Psoas muscle (tissue), 8 donors: ENCODE measurements at regions of chr22 and their contacts with region 1.

Region 1: DNA sequence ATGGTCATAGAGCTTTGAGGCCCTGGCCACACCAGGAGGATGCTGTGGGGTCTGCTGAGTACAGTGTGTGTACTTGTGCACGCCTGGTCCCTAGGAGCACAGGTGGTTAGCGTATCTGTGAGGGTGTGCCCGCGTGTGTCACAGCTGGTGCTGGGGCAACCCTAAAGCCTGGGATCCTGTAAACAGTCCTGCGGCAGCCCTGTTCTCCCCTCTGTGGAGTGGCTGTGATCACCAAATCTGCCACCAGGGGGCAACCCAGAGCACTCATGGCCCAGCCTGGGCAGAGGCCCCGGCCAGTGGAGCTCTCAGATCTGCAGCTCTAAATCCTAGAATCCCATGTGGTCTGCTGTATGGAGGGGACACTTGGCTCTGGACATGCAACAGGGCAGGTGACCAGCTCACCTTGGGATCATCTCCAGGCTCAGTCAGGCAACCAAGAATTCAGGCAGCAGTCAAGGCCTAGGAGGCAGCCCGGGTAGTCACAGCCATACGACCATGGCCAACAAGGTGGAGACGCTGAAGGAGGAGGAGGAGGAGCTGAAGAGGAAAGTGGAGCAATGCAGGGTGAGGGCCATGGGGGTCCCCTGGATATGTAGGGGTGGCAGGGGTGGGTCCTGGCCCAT is 3.9 kb downstream of the SH3BP1 start:
- DNase-seq: peak; percentile 87 to 93
- ATAC-seq: peak; percentile 86 to 91 (median 90)
- H3K4me3 ChIP-seq: no peak overlapping the region
- H3K27ac ChIP-seq: no peak overlapping the region
- H3K4me1 ChIP-seq: no peaks in the 10 kb centered on the region
- H3K27me3 ChIP-seq: peaks cover 0 to 10% (median 0%) of the 10 kb centered on the region in 3 donors
- CTCF ChIP-seq: peak; percentile 95

Region 2: DNA sequence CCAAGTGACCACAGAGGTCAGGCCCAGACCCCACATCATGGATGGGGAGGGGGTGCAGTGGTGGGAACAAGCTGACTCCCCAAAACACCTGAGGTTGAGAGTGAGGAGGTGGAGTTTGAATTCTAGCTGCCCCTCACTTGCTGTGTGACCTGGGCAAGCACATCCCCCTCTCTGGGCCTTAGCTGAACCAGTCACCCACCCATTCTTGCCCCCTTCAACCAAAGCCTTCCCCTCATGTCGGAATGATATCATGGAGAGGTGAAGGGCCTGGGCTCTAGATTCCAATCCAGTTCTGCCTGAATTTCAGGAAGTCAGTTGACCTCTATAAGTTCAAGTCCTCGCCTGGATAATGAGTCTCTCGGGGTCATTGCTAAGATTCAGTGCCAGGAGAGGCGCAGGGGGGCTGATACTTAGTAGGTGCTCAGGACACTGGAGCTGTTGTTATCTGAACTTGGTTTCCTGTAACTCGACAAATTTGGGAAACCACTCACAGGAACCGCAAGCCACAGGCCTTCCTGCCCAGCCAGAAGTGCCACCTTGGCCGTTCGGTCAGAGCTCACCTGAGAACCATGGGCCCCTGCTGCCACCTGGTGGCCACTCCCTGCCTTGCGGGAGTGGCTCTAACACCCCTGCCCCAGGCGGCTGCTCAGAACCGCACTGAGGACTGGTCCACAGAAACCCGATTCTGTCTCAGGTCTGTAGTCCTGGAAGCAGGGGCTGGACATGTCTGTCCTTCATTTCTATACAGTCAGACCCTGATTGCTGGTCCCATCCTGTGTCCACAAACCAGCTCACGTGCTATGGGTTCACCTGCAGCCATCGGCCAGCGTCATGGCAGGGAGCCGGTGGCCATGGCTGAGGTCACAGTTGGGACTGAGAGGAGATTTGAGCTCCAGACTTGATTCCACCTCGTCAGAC is 76.2 kb before region 1 on chr22:
- intact Hi-C with region 1: no loop called
- DNase-seq: peak; percentile 80 to 89
- ATAC-seq: peak; percentile 74 to 88 (median 87)
- H3K4me3 ChIP-seq: no peak overlapping the region
- H3K27ac ChIP-seq: no peak overlapping the region
- H3K4me1 ChIP-seq: peaks cover 28% of the 10 kb centered on the region
- H3K27me3 ChIP-seq: peaks cover 0 to 20% (median 2%) of the 10 kb centered on the region in 3 donors
- CTCF ChIP-seq: peak; percentile 91

Region 3: GRCh38 chr22:37686002-37686982 is 43.0 kb after region 1 on chr22 and contains the start of gene NOL12:
- intact Hi-C with region 1: loop called (anchors 1 to 2 kb)
- DNase-seq: peak; percentile 79 to 89
- ATAC-seq: peak; percentile 86 to 94 (median 90)
- H3K4me3 ChIP-seq: peak within 1 kb of the TSS; percentile 78
- H3K27ac ChIP-seq: peak within 1 kb of the TSS; percentile 99
- H3K4me1 ChIP-seq: peaks cover 18% of the 10 kb centered on the region
- H3K27me3 ChIP-seq: no peaks in the 10 kb centered on the region
- CTCF ChIP-seq: no peak
- total RNA-seq, gene NOL12: 11.9 to 15.4 (median 12.3) TPM

Region 4: DNA sequence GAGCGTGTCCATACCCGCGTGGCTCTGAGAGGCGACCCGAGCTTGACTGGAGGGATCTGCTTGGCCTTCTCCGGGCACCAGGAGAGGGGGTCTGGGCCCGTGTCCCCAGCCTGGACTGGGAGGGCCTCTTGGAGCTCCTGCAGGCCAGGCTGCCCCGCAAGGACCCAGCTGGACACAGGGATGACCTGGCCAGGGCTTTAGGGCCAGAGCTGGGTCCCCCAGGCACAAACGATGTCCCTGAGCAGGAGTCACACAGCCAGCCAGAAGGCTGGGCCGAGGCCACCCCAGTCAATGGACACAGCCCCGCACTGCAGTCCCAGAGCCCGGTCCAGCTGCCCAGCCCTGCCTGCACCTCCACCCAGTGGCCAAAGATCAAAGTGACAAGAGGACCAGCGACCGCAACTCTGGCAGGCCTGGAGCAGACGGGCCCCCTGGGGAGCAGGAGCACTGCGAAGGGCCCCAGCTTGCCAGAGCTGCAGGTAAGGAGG is 91.7 kb after region 1 on chr22:
- intact Hi-C with region 1: loop called in 1 of 2 experiments (anchors 2 kb)
- DNase-seq: peak; percentile 65 to 79
- ATAC-seq: peak; percentile 79 to 82 (median 80)
- H3K4me3 ChIP-seq: no peak overlapping the region
- H3K27ac ChIP-seq: no peak overlapping the region
- H3K4me1 ChIP-seq: no peaks in the 10 kb centered on the region
- H3K27me3 ChIP-seq: peaks cover 0 to 5% (median 4%) of the 10 kb centered on the region in 3 donors
- CTCF ChIP-seq: peak; percentile 48

Region 5: DNA sequence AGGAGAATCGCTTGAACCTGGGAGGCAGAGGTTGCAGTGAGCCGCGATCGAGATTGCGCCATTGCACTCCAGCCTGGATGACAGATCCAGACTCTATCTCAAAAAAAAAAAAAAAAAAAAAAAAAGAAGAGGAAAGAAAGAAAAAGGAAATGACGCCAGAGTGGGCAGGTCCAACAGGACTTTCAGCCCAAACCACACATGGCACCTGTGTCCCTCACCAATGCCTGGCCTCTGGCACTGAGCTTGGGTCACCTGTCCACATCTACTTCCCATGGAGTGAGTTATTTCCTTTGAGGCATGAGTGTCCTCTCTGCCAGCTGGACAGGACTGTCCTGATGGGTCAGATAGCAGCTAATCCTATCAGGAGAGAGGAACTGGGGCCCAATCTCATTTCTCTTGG is 149.2 kb after region 1 on chr22:
- intact Hi-C with region 1: loop called in 1 of 2 experiments (anchors 5 kb)
- DNase-seq: no peak
- ATAC-seq: peak in 1 of 4 donors; percentile 22
- H3K4me3 ChIP-seq: no peak overlapping the region
- H3K27ac ChIP-seq: no peak overlapping the region
- H3K4me1 ChIP-seq: no peaks in the 10 kb centered on the region
- H3K27me3 ChIP-seq: no peaks in the 10 kb centered on the region
- CTCF ChIP-seq: no peak